CD8-positive, alpha-beta T cell (primary cell): ENCODE measurements at regions of chr19 and their contacts with region 1.

Region 1: GRCh38 chr19:6790194-6791128 is 18.0 kb downstream of the VAV1 start:
- DNase-seq: no peak
- ATAC-seq: no peak
- H3K4me3 ChIP-seq: no peak overlapping the region
- H3K4me3 Mint-ChIP-seq: peak overlapping the region; percentile 47
- H3K27ac ChIP-seq: no peak overlapping the region
- H3K27ac Mint-ChIP-seq: peak overlapping the region; percentile 85
- H3K4me1 ChIP-seq: peaks cover 45% of the 10 kb centered on the region
- H3K4me1 Mint-ChIP-seq: peaks cover 71% of the 10 kb centered on the region
- H3K27me3 ChIP-seq: no peaks in the 10 kb centered on the region
- H3K27me3 Mint-ChIP-seq: no peaks in the 10 kb centered on the region
- CTCF ChIP-seq: no peak

Region 2: DNA sequence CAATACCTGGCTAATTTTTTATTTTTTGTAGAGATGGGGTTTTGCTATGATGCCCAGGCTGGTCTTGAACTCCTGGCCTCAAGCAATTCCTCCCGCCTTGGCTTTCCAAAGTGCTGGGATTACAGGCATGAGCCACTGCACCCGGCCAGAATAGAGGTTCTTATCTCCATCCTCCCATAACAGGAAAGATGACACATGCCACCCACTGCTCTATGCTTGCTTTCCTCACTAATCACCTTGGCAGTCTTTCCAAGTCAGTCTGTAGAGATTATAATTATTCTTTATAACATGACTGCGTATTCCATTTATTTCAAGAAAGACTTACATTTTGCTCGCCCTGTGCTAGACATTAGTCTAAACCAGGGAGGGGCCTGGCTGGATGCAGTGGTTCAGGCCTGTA is 11.3 kb before region 1 on chr19:
- CTCF ChIA-PET with region 1: interaction called, 10 read pairs
- POLR2A ChIA-PET with region 1: interaction called, 3 read pairs
- intact Hi-C with region 1: no loop called
- DNase-seq: no peak
- ATAC-seq: no peak
- H3K4me3 ChIP-seq: no peak overlapping the region
- H3K4me3 Mint-ChIP-seq: no peak overlapping the region
- H3K27ac ChIP-seq: peak overlapping the region in 1 of 2 experiments; percentile 57
- H3K27ac Mint-ChIP-seq: no peak overlapping the region
- H3K4me1 ChIP-seq: peaks cover 42% of the 10 kb centered on the region
- H3K4me1 Mint-ChIP-seq: peaks cover 60% of the 10 kb centered on the region
- H3K27me3 ChIP-seq: no peaks in the 10 kb centered on the region
- H3K27me3 Mint-ChIP-seq: no peaks in the 10 kb centered on the region
- CTCF ChIP-seq: no peak